Activated naive CD4-positive, alpha-beta T cell treated with anti-CD3 and anti-CD28 coated beads, Interleukin-2, amount 10 ng/mL, durations not matched to agents 7 days and 5 days (primary cell): ENCODE measurements at regions of chr17 and their contacts with region 1.

Region 1: DNA sequence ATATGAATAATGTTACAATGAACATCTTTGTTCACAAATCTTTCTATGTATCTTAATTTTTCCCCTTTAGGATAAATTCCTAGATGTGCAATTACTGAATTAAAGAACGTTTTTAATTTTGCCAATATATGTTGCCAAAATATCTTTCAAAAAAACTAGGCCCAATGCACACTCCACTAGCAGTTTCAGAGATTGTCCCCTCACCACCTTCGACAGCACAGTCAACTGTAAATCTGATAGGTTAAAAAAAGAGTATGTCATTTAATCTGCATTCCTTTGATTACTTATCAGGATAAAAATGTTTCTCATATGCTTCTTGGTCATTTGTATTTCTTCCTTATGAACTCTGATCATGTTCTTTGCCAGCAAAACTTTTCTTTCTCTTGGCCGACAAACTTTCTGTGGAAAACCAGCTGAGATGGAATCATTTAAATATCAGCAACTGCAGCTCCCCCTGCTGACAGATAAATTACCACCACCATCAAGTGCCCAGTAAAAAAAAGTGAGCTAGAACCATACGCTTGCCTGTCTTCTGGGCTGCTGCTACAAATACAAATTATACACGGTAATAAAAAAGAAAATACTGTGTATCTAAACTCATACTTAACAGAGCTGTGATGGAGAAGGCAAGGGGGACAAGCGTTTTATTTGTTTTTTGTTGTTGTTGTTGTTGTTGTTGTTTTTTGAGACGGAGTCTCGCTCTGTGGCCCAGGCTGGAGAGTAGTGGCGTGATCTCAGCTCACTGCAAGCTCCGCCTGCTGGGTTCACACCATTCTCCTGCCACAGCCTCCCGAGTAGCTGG is 19.6 kb upstream of the KANSL1 start:
- DNase-seq: peak; percentile 77
- H3K4me3 Mint-ChIP-seq: no peak overlapping the region
- H3K27ac Mint-ChIP-seq: no peak overlapping the region
- H3K4me1 Mint-ChIP-seq: peaks cover 20% of the 10 kb centered on the region
- H3K27me3 Mint-ChIP-seq: no peaks in the 10 kb centered on the region

Region 2: DNA sequence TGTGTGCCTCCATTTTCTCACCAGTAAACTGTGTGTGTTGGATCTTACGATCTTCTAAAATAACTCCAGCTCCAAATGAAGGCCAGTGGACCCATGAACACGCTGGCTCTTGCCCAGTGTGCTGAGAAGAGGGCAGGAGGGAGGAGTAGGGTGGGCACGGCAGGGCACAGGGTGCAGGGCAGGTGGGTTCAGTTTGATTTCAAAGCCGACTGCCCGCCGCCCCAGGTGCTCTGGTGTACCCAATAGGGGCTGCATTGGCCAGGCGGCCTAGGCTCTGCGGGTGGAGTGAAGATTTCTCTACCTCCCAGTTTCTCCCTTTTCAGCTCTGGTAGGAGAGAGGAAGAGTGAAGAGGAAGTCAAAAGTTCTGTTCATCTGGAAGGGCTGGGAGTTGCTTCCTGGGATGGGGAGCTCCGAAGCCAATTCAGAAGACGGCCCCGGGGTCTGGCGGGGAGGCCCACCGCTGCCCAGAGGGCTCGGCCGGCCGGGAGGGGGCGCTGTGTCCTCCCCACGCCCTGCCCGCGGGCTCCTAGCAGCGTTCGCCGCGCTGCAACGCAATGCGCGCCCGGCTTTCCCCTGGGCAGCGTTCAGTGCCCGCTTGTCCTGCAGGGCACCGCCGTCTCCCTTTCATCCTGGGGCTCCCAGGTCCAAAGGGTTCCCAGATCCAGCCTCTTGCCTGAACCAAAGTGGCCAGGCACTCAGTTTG is 429.8 kb before region 1 on chr17:
- CTCF ChIA-PET with region 1: no interaction called
- DNase-seq: peak; percentile 37
- H3K4me3 Mint-ChIP-seq: peak overlapping the region; percentile 51
- H3K27ac Mint-ChIP-seq: no peak overlapping the region
- H3K4me1 Mint-ChIP-seq: peaks cover 8% of the 10 kb centered on the region
- H3K27me3 Mint-ChIP-seq: peaks cover 93% of the 10 kb centered on the region

Region 3: GRCh38 chr17:46002311-46002972 is 210.4 kb before region 1 on chr17:
- CTCF ChIA-PET with region 1: interaction called, 13 read pairs
- DNase-seq: peak; percentile 80
- H3K4me3 Mint-ChIP-seq: no peak overlapping the region
- H3K27ac Mint-ChIP-seq: no peak overlapping the region
- H3K4me1 Mint-ChIP-seq: no peaks in the 10 kb centered on the region
- H3K27me3 Mint-ChIP-seq: peaks cover 18% of the 10 kb centered on the region

Region 4: GRCh38 chr17:46199379-46199778 is 13.5 kb before region 1 on chr17:
- CTCF ChIA-PET with region 1: interaction called, 15 read pairs
- DNase-seq: no peak
- H3K4me3 Mint-ChIP-seq: no peak overlapping the region
- H3K27ac Mint-ChIP-seq: no peak overlapping the region
- H3K4me1 Mint-ChIP-seq: peaks cover 65% of the 10 kb centered on the region
- H3K27me3 Mint-ChIP-seq: no peaks in the 10 kb centered on the region